ENCODE measurements at regions of chr4 and their contacts with region 1.

Region 1: GRCh38 chr4:128635141-128635954 is 174.2 kb upstream of the JADE1 start:
- DNase-seq: peak; percentile 93 to 97 (median 96)
- ATAC-seq: peak; percentile 75 to 87 (median 82)
- H3K4me3 ChIP-seq: peak overlapping the region in 1 of 4 donors; percentile 8
- H3K27ac ChIP-seq: peak overlapping the region; percentile 74 to 90 (median 80)
- H3K4me1 ChIP-seq: peaks cover 25 to 47% (median 36%) of the 10 kb centered on the region in 3 donors
- H3K27me3 ChIP-seq: no peaks in the 10 kb centered on the region
- CTCF ChIP-seq: no peak

Region 2: DNA sequence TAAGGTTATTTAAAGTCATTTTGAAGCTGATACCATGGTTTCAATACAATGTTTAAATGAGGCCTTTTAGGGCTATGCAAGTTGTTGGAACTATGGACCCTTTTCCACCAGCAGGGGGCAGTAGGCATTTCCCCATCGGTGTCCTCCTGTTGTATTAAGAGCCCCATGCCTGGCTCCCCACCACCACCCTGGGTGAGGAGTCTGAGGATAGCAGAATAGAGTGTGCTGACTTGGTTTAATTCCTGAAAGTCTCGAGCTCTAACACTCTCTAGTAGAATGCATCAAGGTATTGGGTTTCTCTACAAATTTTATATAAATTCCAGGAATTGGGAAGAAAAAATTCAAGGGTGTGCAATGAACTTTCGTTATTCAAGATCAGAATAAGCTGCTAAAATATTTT is 60.6 kb before region 1 on chr4:
- intact Hi-C with region 1: loop called in 1 of 3 experiments (anchors 10 kb)
- DNase-seq: peak; percentile 71 to 88 (median 86)
- ATAC-seq: peak; percentile 73 to 82 (median 82)
- H3K4me3 ChIP-seq: no peak overlapping the region
- H3K27ac ChIP-seq: peak overlapping the region; percentile 65 to 85 (median 74)
- H3K4me1 ChIP-seq: peaks cover 34 to 43% (median 41%) of the 10 kb centered on the region in 3 donors
- H3K27me3 ChIP-seq: no peaks in the 10 kb centered on the region
- CTCF ChIP-seq: peak; percentile 35 to 67 (median 60)

Measured in pancreas (tissue), 10 donors.